Tibial artery (tissue), 4 donors: ENCODE measurements at regions of chr13 and their contacts with region 1.

Region 1: DNA sequence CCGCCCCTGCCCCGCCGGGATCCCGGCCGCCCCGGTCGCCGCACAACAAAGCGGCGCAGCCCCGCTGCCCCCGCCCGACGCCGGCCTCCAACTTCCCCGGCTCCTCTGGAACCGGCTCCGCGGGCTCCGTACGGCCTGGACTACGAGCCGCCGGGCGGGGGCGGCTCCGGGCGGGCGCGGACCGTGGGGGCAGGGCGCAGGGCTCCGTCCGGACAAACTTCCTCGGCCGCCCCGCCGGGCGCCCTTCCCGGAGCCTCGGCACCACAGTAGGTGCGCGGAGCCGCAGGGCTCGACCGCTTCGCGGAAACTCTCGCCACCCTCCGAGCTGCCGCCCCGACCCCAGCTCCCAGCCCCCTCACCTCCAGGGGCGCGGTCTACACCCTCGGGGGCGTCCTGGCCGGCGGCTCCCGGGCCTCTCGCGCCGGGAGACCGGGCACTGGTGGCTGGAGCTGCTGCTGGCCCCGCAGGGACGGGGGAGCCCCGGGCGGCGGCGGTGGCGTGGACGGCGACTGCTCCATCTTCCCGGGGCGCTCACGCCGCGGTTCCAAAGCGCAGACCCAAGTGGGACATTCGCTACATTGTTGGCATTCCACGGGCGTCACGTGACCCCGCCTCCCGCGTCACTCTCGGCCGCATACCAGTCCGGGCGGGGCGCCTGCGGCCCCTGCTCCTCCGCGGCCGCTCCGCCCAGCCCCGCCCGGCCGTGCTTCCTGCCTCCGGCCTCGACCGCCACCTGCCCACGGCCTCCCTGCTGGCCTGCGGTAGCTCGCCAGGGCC is at the start of gene LATS2:
- DNase-seq: peak; percentile 97 to 98
- H3K4me3 ChIP-seq: peak within 1 kb of the TSS; percentile 90 to 97
- H3K27ac ChIP-seq: peak within 1 kb of the TSS; percentile 97 to 100
- H3K4me1 ChIP-seq: peaks cover 0 to 58% (median 33%) of the 10 kb centered on the region in 4 donors
- H3K27me3 ChIP-seq: no peaks in the 10 kb centered on the region
- CTCF ChIP-seq: peak; percentile 34 to 35

Region 2: DNA sequence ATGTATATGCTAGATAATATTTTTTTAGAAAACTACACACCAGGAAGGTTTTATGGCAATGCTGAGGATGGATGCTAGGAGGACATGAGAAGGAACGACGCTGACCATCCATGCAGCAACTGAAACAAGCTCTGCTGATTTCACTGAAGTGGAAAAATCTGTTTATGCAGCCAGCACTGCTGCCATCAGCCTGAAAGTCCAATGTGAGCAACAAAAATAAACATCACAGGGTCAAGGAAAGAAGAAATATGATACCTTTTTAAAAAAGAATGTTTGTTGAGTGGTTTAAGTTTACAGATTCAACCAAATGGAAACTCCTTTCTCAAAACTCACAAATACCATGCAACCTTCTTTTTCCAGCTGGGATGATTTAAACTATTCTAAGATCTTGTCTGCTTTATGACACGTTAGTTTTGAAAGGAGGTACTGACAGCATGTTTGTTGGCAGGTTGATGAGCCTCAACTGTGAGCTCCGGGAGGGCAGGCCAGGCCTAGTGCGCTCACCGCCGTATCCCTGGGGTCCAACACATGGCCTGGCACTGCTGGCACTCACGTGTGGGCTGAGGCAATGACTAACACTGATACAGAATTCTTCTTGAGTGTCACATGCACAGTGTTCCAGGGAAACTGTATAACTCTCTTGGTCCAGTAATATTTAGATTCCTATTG is 46.5 kb before region 1 on chr13:
- intact Hi-C with region 1: loop called (anchors 5 kb)
- DNase-seq: peak; percentile 50 to 84
- H3K4me3 ChIP-seq: no peak overlapping the region
- H3K27ac ChIP-seq: peak overlapping the region; percentile 51 to 61
- H3K4me1 ChIP-seq: peaks cover 0 to 89% (median 60%) of the 10 kb centered on the region in 4 donors
- H3K27me3 ChIP-seq: no peaks in the 10 kb centered on the region
- CTCF ChIP-seq: no peak